ENCODE measurements at regions of chr2 and their contacts with region 1.

Region 1: GRCh38 chr2:216023055-216023648 is 9.8 kb upstream of the MREG start:
- DNase-seq: peak; percentile 70
- H3K4me3 Mint-ChIP-seq: no peak overlapping the region
- H3K27ac Mint-ChIP-seq: no peak overlapping the region
- H3K4me1 Mint-ChIP-seq: no peaks in the 10 kb centered on the region
- H3K27me3 Mint-ChIP-seq: no peaks in the 10 kb centered on the region
- CTCF ChIP-seq: peak; percentile 55

Region 2: DNA sequence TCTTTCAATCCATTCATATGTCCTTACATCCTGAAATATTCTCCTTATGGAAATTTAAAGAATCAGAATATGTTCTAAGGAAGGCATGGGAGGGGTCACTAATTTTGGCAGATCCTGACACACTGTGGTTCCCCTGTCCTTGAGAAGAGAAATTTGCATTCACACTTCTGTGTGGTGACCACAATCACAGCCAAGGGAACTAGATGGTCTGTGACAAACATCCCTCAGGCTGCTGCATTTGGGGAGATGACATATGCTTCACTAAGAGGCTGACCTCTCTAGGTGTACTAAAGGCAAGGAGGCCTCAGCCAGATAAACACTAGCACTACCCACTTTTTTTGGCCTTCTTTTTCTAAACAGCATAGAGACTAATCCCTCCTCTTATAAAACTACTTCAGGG is 139.4 kb before region 1 on chr2:
- CTCF ChIA-PET with region 1: no interaction called
- POLR2A ChIA-PET with region 1: no interaction called
- intact Hi-C with region 1: no loop called
- DNase-seq: no peak
- H3K4me3 Mint-ChIP-seq: no peak overlapping the region
- H3K27ac Mint-ChIP-seq: no peak overlapping the region
- H3K4me1 Mint-ChIP-seq: peaks cover 13% of the 10 kb centered on the region
- H3K27me3 Mint-ChIP-seq: no peaks in the 10 kb centered on the region
- CTCF ChIP-seq: no peak

Region 3: GRCh38 chr2:215949991-215950404 is 73.2 kb before region 1 on chr2:
- CTCF ChIA-PET with region 1: interaction called, 202 read pairs
- POLR2A ChIA-PET with region 1: interaction called, 5 read pairs
- intact Hi-C with region 1: loop called (anchors 1 kb)
- DNase-seq: peak; percentile 64
- H3K4me3 Mint-ChIP-seq: no peak overlapping the region
- H3K27ac Mint-ChIP-seq: no peak overlapping the region
- H3K4me1 Mint-ChIP-seq: no peaks in the 10 kb centered on the region
- H3K27me3 Mint-ChIP-seq: no peaks in the 10 kb centered on the region
- CTCF ChIP-seq: peak; percentile 56

Region 4: DNA sequence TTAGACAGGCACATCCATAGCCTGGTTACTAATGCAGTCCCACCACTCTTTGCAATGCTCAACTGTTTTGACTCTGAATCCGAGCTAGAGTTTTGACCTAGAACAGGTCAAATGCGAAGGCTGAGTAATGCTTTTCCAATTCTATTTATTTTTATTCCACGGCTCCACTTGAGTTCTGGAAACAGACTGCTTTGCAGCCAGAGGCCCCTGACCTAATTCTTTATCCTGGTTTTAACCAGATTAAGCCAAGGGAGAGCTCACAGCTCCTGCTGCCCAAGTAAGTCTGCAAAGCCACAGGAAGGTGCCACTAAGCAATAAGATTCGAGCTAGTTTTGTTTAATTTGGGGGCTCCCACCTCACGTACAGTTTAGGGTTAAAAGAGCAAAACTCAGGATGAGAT is 61.2 kb before region 1 on chr2:
- CTCF ChIA-PET with region 1: interaction called, 14 read pairs
- POLR2A ChIA-PET with region 1: no interaction called
- intact Hi-C with region 1: no loop called
- DNase-seq: no peak
- H3K4me3 Mint-ChIP-seq: no peak overlapping the region
- H3K27ac Mint-ChIP-seq: no peak overlapping the region
- H3K4me1 Mint-ChIP-seq: no peaks in the 10 kb centered on the region
- H3K27me3 Mint-ChIP-seq: no peaks in the 10 kb centered on the region
- CTCF ChIP-seq: no peak

Region 5: DNA sequence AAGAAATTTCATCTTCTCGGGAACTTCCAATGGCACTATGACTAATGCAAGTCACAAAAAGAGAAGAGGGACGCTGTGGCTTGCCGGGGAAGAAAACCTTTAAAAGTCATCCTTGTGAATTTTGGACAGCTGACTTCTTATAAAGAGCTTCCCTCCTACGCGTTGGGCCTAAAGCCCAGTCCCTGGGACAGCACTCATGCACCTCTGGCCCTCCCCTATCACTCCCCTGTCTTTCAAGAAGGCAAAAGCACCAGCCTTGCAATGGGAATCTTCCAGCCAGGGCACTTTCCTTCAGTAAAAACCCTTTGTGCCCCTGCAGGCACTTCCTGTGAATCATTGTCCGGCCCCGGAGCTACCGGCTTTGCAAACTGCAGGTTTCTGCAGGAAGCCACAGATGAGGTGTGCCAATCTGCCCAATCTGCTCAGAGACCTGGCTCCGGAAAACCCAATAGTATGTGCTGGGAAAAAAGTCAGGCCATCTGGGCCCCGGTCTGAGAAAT is 16.9 kb before region 1 on chr2:
- CTCF ChIA-PET with region 1: interaction called, 17 read pairs
- POLR2A ChIA-PET with region 1: interaction called, 14 read pairs
- intact Hi-C with region 1: no loop called
- DNase-seq: peak; percentile 96
- H3K4me3 Mint-ChIP-seq: peak overlapping the region; percentile 51
- H3K27ac Mint-ChIP-seq: peak overlapping the region; percentile 71
- H3K4me1 Mint-ChIP-seq: peaks cover 36% of the 10 kb centered on the region
- H3K27me3 Mint-ChIP-seq: no peaks in the 10 kb centered on the region
- CTCF ChIP-seq: no peak

Region 6: DNA sequence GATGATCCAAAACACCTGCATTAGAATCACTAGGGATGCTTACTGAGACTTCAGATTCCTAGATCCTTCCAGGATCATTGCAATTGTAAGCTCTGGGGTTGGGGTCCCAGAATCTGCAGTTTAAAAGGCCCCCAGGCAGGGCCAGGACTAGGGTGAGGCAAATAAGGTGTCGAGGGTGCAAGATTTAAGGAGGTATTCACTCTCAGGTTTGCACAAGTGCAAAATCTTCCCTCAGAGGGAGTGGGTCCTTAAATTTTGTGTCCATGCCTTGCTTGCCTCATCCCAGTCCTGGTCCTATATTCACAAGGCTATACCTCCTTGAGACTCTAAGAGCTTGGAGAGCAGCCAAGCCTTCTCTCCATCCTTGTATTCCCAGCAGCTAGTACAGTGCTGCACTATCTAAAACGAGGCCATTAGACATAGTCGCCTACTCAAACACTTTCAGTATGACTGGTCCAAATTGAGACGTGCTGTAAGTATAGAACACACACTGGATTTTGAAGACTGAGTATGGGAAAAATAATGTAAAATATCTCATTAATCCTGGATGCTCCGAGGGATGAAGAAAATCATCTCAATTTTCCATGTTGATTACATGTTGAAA is 21.8 kb after region 1 on chr2:
- CTCF ChIA-PET with region 1: interaction called, 12 read pairs
- POLR2A ChIA-PET with region 1: interaction called, 3 read pairs
- intact Hi-C with region 1: no loop called
- DNase-seq: no peak
- H3K4me3 Mint-ChIP-seq: no peak overlapping the region
- H3K27ac Mint-ChIP-seq: no peak overlapping the region
- H3K4me1 Mint-ChIP-seq: no peaks in the 10 kb centered on the region
- H3K27me3 Mint-ChIP-seq: no peaks in the 10 kb centered on the region
- CTCF ChIP-seq: no peak

Measured in MCF 10A (cell line).